SK-N-SH (cell line): ENCODE measurements at regions of chr9 and their contacts with region 1.

Region 1: DNA sequence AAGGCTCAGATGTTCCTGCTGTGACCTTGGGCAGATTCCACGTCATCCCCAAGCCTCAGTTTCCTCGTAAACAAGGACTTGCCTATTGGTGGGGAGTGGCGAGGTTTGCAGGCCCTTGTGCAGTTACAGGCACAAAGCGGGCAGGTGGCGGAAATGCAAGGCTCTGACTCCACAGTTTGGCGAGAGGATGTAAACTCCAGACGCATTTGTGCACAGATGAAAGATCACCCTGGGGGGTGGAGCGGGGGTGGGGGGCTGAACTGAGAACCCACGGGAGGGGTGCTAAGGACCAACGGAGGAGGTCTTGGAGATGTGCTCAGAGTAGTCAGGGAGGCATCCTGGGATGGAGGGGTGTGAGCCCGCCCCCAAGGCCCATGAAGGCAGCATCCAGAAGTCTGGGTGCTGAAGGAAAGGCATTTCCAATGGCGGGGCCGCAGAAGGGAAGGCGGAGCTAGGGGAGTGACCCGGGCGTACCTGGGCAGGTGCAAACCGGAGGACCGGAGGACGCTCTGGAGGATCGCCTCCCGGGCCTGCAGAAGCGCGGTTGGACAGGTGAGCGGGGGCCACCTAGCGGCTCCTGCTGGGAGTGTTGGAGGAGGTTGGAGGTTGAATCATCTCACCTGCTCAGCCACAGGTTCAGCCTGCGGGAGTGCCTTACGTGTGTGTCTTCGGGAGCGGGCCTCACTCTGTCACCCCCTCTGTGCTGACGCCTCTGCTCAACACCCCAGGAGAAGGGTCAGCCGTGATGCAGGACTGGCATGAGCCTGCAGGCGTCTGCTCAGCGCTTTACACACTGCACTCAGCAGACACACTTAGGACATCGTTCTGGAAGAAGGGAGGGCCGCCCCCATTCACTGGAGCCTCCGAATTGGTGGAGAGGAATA is 1.9 kb upstream of the FIBCD1 start:
- DNase-seq: peak; percentile 84
- H3K4me3 ChIP-seq: peak overlapping the region in 1 of 2 experiments; percentile 28; a peak in 2 of 4 replicates
- H3K27ac ChIP-seq: no peak overlapping the region
- H3K4me1 ChIP-seq: peaks cover 0 to 10% of the 10 kb centered on the region in 2 experiments; a peak in 1 of 4 replicates
- H3K27me3 ChIP-seq: peaks cover 49% of the 10 kb centered on the region
- CTCF ChIP-seq: peak; percentile 83
- EP300 ChIP-seq: no peak
- RAD21 ChIP-seq: peak; percentile 79

Region 2: DNA sequence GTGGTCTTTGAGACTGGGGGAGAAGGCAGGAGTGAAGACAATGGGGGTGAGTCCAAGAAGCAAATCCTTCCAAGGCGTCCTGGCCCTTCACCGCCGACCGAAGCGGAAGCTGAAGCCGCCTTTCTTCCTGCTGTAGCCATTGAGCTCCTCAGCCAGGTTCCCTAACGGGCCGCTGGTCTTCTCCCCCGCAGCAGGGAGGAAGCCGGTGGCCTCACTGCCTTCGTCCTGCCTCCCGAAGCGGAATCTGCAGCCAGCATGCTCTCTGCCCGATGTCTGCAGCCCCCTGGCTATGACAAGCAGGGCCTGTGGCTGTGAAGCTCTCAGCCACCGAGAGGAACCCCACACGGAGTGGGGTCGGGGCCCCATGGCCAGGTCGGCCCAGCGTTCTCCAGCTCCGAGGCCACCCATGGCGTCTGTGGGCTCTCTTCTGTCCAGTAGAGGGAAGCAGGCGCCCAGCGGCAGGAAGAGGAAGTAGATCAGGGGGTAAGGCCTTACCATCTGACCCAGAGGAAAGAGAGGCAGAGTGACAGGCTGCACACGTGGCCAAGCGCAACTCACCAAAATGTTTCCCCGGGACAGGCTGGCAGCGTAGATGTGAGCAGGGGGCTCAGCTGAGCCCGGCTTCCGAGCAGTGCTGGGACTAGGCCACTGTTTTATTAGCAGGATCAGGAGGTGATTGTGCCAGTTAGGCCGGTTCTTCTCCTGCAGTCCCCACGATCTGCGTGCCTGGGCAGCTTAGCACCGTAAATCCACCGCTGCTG is 47.4 kb before region 1 on chr9:
- CTCF ChIA-PET with region 1: interaction called, 12 read pairs
- POLR2A ChIA-PET with region 1: no interaction called
- DNase-seq: peak; percentile 41
- H3K4me3 ChIP-seq: no peak overlapping the region
- H3K27ac ChIP-seq: no peak overlapping the region
- H3K4me1 ChIP-seq: peaks cover 0 to 3% of the 10 kb centered on the region in 2 experiments; a peak in 1 of 4 replicates
- H3K27me3 ChIP-seq: no peaks in the 10 kb centered on the region
- CTCF ChIP-seq: 0 out of 2 replicates have a peak, but pooled peaks have one; percentile 10
- EP300 ChIP-seq: no peak
- RAD21 ChIP-seq: no peak

Region 3: GRCh38 chr9:130912932-130913598 is 27.9 kb before region 1 on chr9:
- CTCF ChIA-PET with region 1: interaction called, 10 read pairs
- POLR2A ChIA-PET with region 1: no interaction called
- DNase-seq: no peak
- H3K4me3 ChIP-seq: no peak overlapping the region
- H3K27ac ChIP-seq: no peak overlapping the region
- H3K4me1 ChIP-seq: peaks cover 0 to 3% of the 10 kb centered on the region in 2 experiments; a peak in 1 of 4 replicates
- H3K27me3 ChIP-seq: no peaks in the 10 kb centered on the region
- CTCF ChIP-seq: no peak
- EP300 ChIP-seq: no peak
- RAD21 ChIP-seq: no peak

Region 4: DNA sequence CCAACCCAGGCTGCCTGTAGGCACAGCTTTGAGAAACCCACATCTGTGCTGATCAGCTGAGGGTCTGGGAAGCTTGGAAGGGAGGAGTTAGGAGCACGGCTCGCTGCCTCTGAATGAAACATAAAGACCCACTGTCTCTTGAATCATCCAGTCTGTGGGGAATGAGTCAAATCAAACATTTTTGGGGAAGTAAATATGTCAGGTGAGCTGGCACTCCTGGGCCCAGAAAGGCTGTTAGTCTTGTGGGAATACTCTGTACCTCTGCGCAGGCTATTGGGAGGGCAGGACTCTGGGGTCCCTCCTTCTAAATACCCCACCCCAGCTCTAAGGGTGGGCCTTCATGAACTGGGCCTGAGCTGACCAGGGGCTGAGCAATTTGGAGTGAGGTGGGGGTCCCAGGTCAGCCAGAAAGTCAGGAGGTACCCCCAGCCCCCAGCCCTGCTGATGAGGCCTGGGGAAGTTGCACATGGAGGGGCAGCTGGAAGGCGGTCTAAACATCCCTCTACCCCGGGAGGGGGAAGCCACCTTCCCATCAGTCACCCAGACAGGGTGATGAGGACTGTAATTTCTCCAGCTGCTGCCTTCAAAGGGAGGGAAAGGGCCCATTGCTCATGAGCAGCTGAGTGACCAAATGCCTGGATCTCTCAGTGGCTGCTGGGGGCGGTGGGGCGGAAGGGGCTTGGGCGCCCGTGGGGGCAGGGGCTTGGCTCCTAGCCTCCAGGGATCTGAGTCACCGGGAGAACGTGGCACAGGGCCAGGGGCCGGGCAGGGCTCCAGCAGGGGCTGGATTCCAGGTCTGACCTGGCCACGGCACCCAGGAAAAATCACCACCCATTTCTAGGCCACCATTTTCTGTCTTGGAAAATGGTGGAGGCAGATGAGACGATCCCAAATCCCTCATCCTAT is 12.7 kb before region 1 on chr9:
- CTCF ChIA-PET with region 1: interaction called, 10 read pairs
- POLR2A ChIA-PET with region 1: no interaction called
- DNase-seq: peak; percentile 77
- H3K4me3 ChIP-seq: no peak overlapping the region
- H3K27ac ChIP-seq: peak overlapping the region in 1 of 2 experiments; percentile 71; a peak in 2 of 4 replicates
- H3K4me1 ChIP-seq: peaks cover 11 to 18% of the 10 kb centered on the region in 2 experiments; a peak in 3 of 4 replicates
- H3K27me3 ChIP-seq: no peaks in the 10 kb centered on the region
- CTCF ChIP-seq: no peak
- EP300 ChIP-seq: peak in 1 of 2 experiments; percentile 25; a peak in 1 of 4 replicates
- RAD21 ChIP-seq: no peak

Region 5: DNA sequence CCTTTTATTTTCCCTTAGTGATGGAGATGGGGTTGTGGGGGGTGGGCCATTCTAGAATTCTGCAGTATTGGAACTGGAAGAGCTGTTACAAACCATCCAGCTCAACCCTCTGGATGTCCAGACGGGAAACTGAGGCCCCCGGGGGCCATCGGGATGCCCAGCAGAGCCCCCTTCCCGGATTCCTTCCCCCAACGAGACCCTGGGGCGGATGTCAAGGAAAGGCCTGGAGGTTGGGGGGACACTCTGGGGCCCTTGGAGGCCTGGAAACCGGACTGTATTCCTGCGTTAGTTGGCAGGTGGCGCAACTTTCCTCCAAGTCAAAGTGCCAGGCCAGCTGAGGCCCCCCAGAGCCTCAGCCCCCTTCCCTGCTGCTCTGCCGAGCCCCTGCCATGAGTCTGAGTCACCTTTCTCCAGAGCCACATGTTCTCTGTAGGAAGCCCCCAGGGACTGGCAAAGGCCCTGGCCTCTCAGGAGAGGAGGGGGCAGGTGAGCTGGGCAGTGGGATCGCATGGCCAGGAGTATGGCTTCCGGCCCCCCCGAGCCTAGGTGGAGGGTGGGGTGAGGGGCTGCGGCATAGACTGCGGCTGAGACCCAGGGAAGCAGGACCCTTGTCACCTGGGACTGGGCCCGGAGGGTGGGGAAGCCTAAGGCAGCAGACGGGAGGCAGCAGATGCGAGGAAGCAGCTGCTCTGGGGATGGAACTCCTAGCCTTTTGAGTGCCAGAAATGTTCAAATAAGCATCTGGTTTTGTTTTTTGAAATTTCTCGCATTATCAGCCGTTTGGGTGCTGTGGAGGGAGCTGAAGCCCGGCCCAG is 15.9 kb after region 1 on chr9:
- CTCF ChIA-PET with region 1: interaction called, 13 read pairs
- POLR2A ChIA-PET with region 1: no interaction called
- DNase-seq: no peak
- H3K4me3 ChIP-seq: no peak overlapping the region
- H3K27ac ChIP-seq: no peak overlapping the region; a peak in 1 of 4 replicates
- H3K4me1 ChIP-seq: peaks cover 0 to 6% of the 10 kb centered on the region in 2 experiments; a peak in 1 of 4 replicates
- H3K27me3 ChIP-seq: 0 out of 2 replicates have a peak, but pooled peaks cover 11% of the 10 kb centered on the region
- CTCF ChIP-seq: no peak
- EP300 ChIP-seq: no peak
- RAD21 ChIP-seq: no peak

Region 6: DNA sequence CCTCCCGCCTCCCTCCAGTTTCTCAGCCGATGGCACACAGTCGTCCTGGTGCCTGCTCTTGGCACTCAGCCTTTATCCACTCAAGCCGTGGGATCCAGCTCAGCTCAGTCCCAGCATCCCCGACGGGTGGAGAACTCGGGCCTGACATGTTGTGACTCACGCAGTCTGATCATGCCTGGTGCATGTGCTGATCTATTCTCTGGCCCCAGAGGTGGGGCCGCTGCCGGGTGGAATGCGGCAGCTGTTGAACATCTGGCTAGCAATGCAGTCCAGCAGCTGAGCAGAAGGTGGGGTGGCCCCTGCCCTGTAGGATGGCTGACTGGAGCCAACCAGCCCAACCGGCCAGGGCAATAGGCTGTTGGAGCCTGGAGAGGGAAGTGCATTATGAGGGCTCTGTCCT is 153.7 kb after region 1 on chr9:
- CTCF ChIA-PET with region 1: no interaction called
- POLR2A ChIA-PET with region 1: no interaction called
- DNase-seq: no peak
- H3K4me3 ChIP-seq: no peak overlapping the region
- H3K27ac ChIP-seq: no peak overlapping the region
- H3K4me1 ChIP-seq: peaks cover 0 to 24% of the 10 kb centered on the region in 2 experiments; a peak in 1 of 4 replicates
- H3K27me3 ChIP-seq: peaks cover 27% of the 10 kb centered on the region
- CTCF ChIP-seq: no peak
- EP300 ChIP-seq: no peak
- RAD21 ChIP-seq: no peak